Activated CD4-positive, alpha-beta memory T cell treated with anti-CD3 and anti-CD28 coated beads, Interleukin-2, amount 10 ng/mL, durations not matched to agents 7 days and 5 days (primary cell): ENCODE measurements at regions of chr7 and their contacts with region 1.

Region 1: DNA sequence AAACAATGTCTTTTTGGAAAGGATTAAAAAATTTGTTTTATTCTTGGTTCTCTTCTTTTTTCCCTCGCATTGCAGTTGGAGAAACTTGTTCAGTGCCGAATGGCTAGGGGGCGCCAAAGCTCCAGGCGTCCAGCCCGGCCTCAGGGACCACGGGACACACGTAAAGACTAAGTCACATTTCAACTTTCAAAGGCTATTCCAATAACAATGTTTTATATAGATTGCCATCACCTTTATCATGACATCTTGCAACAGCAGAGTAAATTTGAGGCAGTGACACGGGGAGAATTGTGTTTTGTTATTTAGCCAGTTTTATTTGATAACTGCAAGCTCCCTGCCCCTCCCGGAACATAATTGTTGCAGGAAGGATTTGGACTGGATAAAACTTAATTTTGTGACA is 2.2 kb upstream of the IGFBP3 start:
- DNase-seq: peak; percentile 72
- H3K4me3 Mint-ChIP-seq: peak overlapping the region; percentile 38
- H3K27ac Mint-ChIP-seq: peak overlapping the region; percentile 70
- H3K4me1 Mint-ChIP-seq: peaks cover 42% of the 10 kb centered on the region
- H3K27me3 Mint-ChIP-seq: peaks cover 49% of the 10 kb centered on the region

Region 2: GRCh38 chr7:45940939-45941338 is 17.6 kb after region 1 on chr7:
- CTCF ChIA-PET with region 1: interaction called, 11 read pairs
- POLR2A ChIA-PET with region 1: interaction called, 5 read pairs
- DNase-seq: no peak
- H3K4me3 Mint-ChIP-seq: peak overlapping the region; percentile 61
- H3K27ac Mint-ChIP-seq: no peak overlapping the region
- H3K4me1 Mint-ChIP-seq: peaks cover 20% of the 10 kb centered on the region
- H3K27me3 Mint-ChIP-seq: no peaks in the 10 kb centered on the region